WTC11 (cell line): ENCODE measurements at regions of chrX and their contacts with region 1.

Region 1: GRCh38 chrX:150772150-150772970 is 79.2 kb downstream of the MTMR1 start:
- DNase-seq: peak; percentile 90
- ATAC-seq: peak; percentile 87
- H3K4me3 Mint-ChIP-seq: no peak overlapping the region
- H3K27ac Mint-ChIP-seq: no peak overlapping the region
- H3K4me1 Mint-ChIP-seq: peaks cover 15% of the 10 kb centered on the region
- H3K27me3 Mint-ChIP-seq: no peaks in the 10 kb centered on the region
- CTCF ChIP-seq: peak; percentile 82

Region 2: GRCh38 chrX:149757206-149758067 is 1014.9 kb before region 1 on chrX:
- CTCF ChIA-PET with region 1: no interaction called
- POLR2A ChIA-PET with region 1: no interaction called
- DNase-seq: no peak
- ATAC-seq: no peak
- H3K4me3 Mint-ChIP-seq: no peak overlapping the region
- H3K27ac Mint-ChIP-seq: no peak overlapping the region
- H3K4me1 Mint-ChIP-seq: no peaks in the 10 kb centered on the region
- H3K27me3 Mint-ChIP-seq: no peaks in the 10 kb centered on the region; the same call in none of the 2 replicates
- CTCF ChIP-seq: no peak

Region 3: DNA sequence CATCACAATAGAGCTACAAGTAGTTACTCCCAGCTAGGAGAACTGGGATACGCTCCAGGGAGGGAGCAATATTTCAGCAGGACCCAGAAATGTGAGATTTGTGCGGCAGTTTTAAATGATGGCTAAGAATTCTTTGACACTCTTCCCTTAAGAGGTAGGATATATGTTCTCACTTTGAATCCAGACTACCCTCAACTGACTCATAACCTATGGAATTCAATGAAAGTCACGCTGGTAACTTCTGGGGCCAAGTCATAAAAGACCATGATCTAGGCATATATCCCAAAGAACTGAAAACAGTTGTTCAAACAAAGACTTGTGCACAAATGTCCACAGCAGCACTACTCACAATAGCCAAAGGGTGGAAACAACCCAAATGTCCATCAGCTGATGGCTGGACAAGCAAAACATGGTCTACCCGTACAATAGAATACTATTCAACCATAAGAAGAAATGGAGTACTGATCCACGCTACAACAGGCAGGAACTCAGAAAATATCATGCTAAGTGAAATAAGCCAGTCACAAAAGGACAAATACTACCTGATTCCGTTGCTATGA is 115.6 kb after region 1 on chrX:
- CTCF ChIA-PET with region 1: interaction called, 10 read pairs
- POLR2A ChIA-PET with region 1: no interaction called
- DNase-seq: no peak
- ATAC-seq: no peak
- H3K4me3 Mint-ChIP-seq: no peak overlapping the region
- H3K27ac Mint-ChIP-seq: no peak overlapping the region
- H3K4me1 Mint-ChIP-seq: peaks cover 6% of the 10 kb centered on the region; the same call in 1 of the 2 replicates
- H3K27me3 Mint-ChIP-seq: no peaks in the 10 kb centered on the region
- CTCF ChIP-seq: no peak

Region 4: DNA sequence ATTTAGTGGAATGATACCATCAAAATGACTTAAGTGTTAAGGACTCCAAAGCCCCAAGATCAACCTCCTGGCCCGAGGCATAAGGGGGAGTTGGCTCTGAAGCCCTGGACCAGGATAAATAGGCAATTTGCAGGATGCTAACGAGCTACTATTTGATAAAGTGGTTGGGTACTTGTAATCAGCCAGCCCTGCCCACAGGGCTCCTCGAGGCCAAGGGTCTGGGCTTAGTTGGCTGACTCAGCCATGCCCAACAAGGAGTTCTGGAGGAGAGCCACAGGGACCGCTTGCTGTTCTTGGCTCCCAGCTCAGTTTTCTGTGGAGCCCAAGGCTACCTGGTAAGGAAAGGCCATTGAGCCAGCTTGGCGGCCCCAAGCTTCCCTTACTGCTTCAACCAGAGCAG is 218.5 kb after region 1 on chrX:
- CTCF ChIA-PET with region 1: interaction called, 15 read pairs
- POLR2A ChIA-PET with region 1: interaction called, 3 read pairs
- DNase-seq: no peak
- ATAC-seq: peak; percentile 73
- H3K4me3 Mint-ChIP-seq: no peak overlapping the region
- H3K27ac Mint-ChIP-seq: peak overlapping the region; percentile 58
- H3K4me1 Mint-ChIP-seq: peaks cover 14% of the 10 kb centered on the region
- H3K27me3 Mint-ChIP-seq: no peaks in the 10 kb centered on the region
- CTCF ChIP-seq: no peak

Region 5: DNA sequence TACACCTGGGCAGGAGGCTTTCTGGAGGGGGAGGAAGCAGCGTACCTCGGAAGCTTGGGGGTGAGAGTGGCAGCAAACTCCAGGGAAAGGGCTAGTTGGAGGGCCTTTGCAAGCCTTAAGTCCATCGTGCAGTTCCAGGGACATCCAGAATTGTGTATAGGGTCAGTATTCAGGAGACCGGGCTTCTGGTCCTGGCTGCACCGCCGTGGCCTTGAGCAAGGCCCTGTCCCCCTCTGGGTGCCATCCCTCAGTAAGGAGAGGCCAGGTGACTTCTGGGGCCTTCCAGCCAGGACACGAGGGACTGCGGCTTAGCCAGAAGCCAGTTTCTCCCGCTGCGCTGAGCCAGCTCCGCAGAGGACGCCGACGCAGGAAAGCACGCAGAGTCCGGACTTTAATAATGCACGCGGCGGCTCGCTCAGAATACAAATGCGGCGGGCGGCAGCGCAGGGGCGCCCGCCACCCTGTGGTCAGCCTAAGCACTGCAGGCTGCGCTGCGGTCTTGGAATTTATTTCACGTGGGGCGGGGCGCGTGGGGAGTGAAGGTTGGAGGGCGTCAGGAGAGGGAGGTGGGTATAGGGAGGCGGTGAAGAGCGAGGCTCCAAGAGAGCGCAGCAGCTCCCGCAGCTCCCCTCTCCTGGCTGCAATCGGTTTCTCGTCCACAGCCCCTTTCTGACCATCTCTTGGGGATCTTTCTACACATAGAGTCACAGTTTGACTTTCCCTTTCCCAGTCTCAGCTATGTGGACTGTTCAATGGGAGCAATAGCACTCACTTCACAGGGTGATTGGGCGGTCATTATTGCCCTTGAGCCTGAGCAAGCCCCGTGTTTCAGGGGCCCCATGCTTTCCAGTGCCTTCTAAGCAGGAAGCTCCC is 310.0 kb after region 1 on chrX:
- CTCF ChIA-PET with region 1: interaction called, 90 read pairs
- POLR2A ChIA-PET with region 1: interaction called, 4 read pairs
- DNase-seq: peak; percentile 66
- ATAC-seq: peak; percentile 84
- H3K4me3 Mint-ChIP-seq: peak overlapping the region; percentile 59
- H3K27ac Mint-ChIP-seq: no peak overlapping the region
- H3K4me1 Mint-ChIP-seq: peaks cover 13% of the 10 kb centered on the region
- H3K27me3 Mint-ChIP-seq: peaks cover 27% of the 10 kb centered on the region
- CTCF ChIP-seq: peak; percentile 50